ENCODE measurements at regions of chr1 and their contacts with region 1.

Region 1: DNA sequence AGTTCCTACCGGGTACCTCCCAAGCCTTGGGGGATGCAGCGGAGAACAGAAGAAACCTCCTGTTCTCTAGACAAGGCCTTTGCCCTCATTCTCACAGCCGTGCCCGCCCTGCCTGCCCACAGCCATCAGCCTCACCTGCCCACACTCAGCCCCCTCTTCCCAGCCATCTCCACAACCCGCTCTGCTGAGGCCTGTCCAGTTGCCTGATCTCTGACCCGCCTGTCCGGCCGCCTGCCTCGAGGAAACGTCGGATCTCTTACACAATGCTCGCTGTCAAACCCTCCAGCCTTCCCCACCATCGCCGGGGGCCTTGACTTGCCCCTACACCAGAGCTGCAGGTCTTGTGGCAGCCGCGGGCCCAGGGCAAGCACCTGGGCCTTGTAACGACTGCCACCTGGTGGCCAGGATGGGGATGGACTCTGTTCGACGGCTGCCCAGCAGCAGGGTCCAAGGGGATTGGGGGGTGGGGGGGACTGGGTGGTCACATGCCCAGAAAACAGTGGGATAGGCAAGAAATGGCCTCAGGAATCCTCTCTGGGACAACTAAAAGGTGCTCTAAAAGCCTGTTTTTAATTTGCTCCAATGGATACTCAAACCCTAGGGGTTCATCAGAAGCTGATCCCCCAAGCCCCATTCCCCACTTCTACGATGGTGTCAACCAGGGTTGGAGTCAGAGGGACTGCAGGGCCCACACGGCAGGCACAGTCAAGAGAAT is 31.0 kb downstream of the SLC45A1 start:
- DNase-seq: peak; percentile 45
- H3K4me3 Mint-ChIP-seq: no peak overlapping the region
- H3K27ac Mint-ChIP-seq: no peak overlapping the region
- H3K4me1 Mint-ChIP-seq: peaks cover 2% of the 10 kb centered on the region
- H3K27me3 Mint-ChIP-seq: peaks cover 2% of the 10 kb centered on the region

Region 2: DNA sequence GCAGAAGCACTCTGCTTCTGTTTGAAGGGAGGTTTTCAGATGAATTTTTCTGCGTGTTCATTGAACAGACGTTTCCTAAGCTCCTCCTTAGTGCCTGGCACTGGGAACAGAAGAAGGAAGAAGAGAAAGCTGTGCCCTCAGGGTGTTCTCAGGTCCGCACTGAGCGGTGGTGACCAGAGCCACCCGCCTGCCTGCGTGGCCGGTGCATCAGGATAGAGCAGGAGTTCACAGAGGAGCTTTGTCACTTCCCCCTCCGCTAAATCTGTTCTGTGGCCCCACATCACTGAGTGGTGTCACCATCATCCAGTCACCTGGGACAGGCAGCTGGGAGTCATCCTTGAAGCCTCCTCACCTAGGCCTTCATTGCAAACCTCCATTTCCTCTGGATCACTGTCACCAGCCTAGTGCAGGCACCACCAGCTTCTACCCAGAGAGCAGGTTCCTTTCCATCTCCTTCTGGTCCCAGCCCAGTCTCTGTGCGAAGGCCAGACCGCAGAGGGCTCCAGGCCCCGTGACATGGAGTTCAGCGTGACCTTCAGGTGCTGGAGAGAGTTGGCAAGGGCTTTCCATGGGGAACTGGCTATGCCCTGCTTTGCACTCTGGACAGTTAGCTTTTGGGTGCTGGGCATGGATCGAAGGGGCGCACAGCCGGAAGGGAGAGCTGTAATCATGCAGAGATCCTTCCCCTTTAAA is 365.7 kb before region 1 on chr1:
- intact Hi-C with region 1: loop called (anchors 1 kb)
- DNase-seq: no peak
- H3K4me3 Mint-ChIP-seq: no peak overlapping the region
- H3K27ac Mint-ChIP-seq: no peak overlapping the region
- H3K4me1 Mint-ChIP-seq: peaks cover 13% of the 10 kb centered on the region
- H3K27me3 Mint-ChIP-seq: no peaks in the 10 kb centered on the region

Region 3: GRCh38 chr1:8015036-8015808 is 333.7 kb before region 1 on chr1:
- intact Hi-C with region 1: loop called (anchors 1 kb)
- DNase-seq: peak; percentile 19
- H3K4me3 Mint-ChIP-seq: no peak overlapping the region
- H3K27ac Mint-ChIP-seq: no peak overlapping the region
- H3K4me1 Mint-ChIP-seq: peaks cover 3% of the 10 kb centered on the region
- H3K27me3 Mint-ChIP-seq: peaks cover 14% of the 10 kb centered on the region